ENCODE measurements at regions of chr18 and their contacts with region 1.

Region 1: DNA sequence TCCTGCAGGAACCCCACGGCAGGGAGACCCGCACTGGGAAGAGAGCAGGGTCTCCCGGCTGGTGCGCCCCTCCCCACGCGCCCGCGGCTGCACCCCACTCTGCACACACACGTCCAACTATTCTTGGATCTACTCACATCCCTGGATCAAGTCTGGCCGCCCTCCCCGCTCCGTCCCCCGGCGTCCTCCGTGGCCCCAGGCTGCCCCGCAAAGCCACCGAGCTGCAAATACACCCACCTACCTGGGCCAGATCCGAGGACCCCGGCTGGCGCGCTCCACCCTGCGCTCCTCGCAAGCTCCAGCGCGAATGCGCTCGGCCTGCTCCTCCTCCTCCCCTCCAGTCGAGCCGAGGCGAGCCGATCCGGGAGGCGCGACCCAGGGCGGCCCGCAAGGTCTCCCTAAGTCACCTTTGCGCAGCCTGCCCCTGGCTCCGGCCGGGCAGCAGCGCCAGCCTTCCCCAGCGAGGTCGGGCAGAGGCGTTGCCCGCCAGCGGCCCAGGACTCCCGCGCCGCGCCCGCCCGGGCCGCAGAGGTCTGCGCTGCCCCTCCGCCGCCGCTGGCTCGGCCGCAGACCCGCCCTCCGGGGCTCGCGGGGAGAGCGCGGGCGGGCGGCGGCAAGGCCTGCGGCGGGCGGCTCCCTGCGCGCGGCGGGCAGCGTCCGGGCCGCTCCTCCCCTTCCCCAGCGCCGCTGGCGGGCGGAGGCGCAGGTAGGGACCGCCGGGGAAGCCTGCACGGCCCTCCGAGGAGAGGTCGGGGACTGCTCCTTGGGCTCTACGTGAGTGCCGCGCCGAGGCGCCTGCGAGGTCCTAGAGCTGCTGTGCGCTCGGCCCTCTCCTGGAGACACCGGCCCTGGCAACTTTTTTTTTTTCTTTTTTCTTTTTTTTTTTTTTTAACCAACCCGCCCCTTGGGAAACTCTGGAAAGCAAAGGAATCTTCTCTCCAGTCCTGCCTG is 126.0 kb downstream of the OSBPL1A start:
- DNase-seq: peak; percentile 75 to 83 (median 81)
- H3K4me3 ChIP-seq: peak overlapping the region; percentile 46 to 88 (median 72)
- H3K27ac ChIP-seq: peak overlapping the region; percentile 65 to 94 (median 90)
- H3K4me1 ChIP-seq: peaks cover 5 to 47% of the 10 kb centered on the region in 2 donors
- H3K27me3 ChIP-seq: no peaks in the 10 kb centered on the region
- CTCF ChIP-seq: peak in 5 of 6 experiments; percentile 21 to 32 (median 26)
- POLR2A ChIP-seq: peak in 1 of 2 donors; percentile 74

Region 2: DNA sequence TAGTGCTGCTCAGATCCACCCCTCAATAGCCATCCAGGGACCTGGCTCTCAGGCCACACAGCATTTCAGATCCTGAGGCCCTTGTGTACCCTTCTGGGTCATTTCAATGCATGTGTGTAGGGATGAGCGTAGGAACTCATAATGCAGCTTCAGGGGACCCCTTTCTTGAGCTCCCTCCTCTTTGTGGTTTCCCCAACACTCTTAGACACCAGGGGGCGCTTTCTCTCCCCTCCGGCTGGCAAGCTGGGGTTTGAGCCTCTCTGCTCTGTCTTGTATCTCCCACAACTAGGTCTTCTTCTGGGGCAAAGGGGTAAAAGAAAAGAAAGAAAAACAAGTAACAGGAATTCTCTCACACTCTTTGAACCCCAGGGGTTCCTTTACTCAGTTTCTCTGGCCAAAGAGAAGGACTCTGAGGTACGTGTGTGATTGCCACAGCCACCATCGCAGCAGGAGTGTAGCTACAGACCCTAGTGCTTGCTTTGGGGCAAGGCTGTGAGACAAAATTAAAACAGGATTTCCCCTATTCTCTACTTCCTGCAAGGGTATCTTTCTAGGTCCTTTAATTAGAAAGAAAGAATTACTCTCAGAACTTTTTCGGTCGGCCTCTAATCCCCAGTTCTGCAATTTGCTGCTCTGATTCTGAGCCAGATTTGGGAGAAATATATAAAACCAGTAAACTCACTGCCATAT is 94.8 kb before region 1 on chr18:
- intact Hi-C with region 1: loop called in 1 of 2 experiments (anchors 5 kb)
- DNase-seq: peak; percentile 56 to 79 (median 72)
- H3K4me3 ChIP-seq: no peak overlapping the region
- H3K27ac ChIP-seq: no peak overlapping the region
- H3K4me1 ChIP-seq: no peaks in the 10 kb centered on the region
- H3K27me3 ChIP-seq: no peaks in the 10 kb centered on the region
- CTCF ChIP-seq: peak; percentile 35 to 70 (median 61)
- POLR2A ChIP-seq: no peak